Right lobe of liver (tissue), 6 donors: ENCODE measurements at regions of chrX and their contacts with region 1.

Region 1: GRCh38 chrX:120111611-120112010 is 4.1 kb downstream of the RHOXF1 start:
- DNase-seq: no peak
- ATAC-seq: no peak
- H3K4me3 ChIP-seq: no peak overlapping the region
- H3K27ac ChIP-seq: no peak overlapping the region
- H3K4me1 ChIP-seq: no peaks in the 10 kb centered on the region
- H3K27me3 ChIP-seq: no peaks in the 10 kb centered on the region
- CTCF ChIP-seq: no peak
- POLR2A ChIP-seq: no peak

Region 2: GRCh38 chrX:119685225-119686066 is 426.2 kb before region 1 on chrX:
- intact Hi-C with region 1: no loop called
- DNase-seq: peak in 1 of 3 donors; percentile 36
- ATAC-seq: peak; percentile 57 to 66 (median 59)
- H3K4me3 ChIP-seq: no peak overlapping the region
- H3K27ac ChIP-seq: peak overlapping the region; percentile 38 to 66 (median 63)
- H3K4me1 ChIP-seq: peaks cover 0 to 5% (median 0%) of the 10 kb centered on the region in 4 donors
- H3K27me3 ChIP-seq: no peaks in the 10 kb centered on the region
- CTCF ChIP-seq: no peak
- POLR2A ChIP-seq: no peak

Region 3: DNA sequence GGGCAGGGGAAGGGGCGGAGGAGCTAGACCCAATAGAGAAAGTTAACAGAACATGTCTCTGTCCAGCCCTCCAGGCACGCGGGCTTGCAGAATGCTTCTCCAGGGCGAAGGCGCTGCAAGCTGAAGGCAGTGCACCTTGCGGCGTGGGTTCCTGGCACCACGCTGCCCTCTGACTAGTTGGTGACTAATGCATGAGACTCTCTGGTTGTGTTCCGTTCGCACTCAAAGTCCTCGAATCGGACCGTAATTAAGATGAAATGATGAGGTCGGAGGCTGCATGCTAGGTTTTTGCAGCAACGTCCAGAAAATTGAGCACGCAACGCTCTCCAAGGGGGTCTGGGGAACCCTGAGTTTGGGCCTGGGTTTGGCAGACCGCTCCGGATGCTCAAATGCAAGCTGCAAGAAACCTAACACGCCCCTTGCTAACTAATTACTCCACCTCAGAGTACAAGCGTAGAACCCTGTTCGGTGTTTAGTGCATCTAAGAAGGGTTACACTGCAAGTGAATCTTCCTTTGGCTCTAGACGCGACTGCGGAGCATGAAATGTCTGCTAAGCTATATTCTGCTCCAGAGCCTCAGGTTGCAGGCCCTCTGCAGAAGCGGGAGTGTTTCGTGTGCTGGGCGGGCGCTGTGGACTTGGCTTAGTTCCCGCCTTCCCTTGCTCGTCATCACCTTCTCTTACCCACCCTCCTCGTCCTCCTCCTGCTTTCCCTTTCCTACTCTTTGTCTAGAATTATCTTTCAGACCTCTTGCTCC is 110.9 kb before region 1 on chrX:
- intact Hi-C with region 1: loop called in 1 of 2 experiments (anchors 10 kb)
- DNase-seq: no peak
- ATAC-seq: peak in 1 of 4 donors; percentile 54
- H3K4me3 ChIP-seq: no peak overlapping the region
- H3K27ac ChIP-seq: no peak overlapping the region
- H3K4me1 ChIP-seq: no peaks in the 10 kb centered on the region
- H3K27me3 ChIP-seq: peaks cover 0 to 34% of the 10 kb centered on the region in 2 donors
- CTCF ChIP-seq: no peak
- POLR2A ChIP-seq: no peak